ENCODE measurements at regions of chr7 and their contacts with region 1.

Region 1: GRCh38 chr7:55887821-55888247 is 578 bp downstream of the ZNF713 start:
- DNase-seq: peak in 1 of 2 donors; percentile 17
- ATAC-seq: no peak

Region 2: GRCh38 chr7:55951637-55952351 is 64.0 kb after region 1 on chr7 and contains the start of gene MRPS17:
- intact Hi-C with region 1: loop called in 1 of 2 experiments (anchors 10 kb)
- DNase-seq: peak; percentile 93 to 96
- ATAC-seq: peak; percentile 100
- total RNA-seq, gene MRPS17: 10.4 to 14.7 TPM